Endothelial cell of umbilical vein (primary cell): ENCODE measurements at regions of chr7 and their contacts with region 1.

Region 1: DNA sequence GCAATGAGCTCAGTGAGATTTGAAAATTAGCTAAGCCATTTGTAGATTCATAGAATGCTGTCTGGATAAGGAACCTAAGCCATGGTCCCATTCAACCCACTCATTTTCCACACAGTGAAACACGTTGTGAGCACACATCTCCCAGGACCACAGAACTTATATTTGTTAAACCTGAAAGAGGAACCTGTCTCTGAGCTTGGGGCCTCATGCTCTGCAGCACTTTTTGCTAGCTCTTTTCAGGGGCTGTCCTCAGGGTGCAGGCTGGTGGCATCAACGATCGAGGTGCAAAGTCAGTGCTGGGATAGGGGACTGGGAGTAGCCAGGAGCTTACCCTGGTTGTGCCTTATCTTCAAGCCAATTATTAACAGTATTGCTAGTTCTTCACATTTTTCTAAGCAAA is 11.9 kb downstream of the HECW1 start:
- DNase-seq: no peak
- H3K4me3 ChIP-seq: no peak overlapping the region
- H3K27ac ChIP-seq: no peak overlapping the region
- H3K4me1 ChIP-seq: no peaks in the 10 kb centered on the region
- H3K27me3 ChIP-seq: peaks cover 0 to 6% of the 10 kb centered on the region in 2 experiments
- CTCF ChIP-seq: no peak
- POLR2A ChIP-seq: no peak

Region 2: DNA sequence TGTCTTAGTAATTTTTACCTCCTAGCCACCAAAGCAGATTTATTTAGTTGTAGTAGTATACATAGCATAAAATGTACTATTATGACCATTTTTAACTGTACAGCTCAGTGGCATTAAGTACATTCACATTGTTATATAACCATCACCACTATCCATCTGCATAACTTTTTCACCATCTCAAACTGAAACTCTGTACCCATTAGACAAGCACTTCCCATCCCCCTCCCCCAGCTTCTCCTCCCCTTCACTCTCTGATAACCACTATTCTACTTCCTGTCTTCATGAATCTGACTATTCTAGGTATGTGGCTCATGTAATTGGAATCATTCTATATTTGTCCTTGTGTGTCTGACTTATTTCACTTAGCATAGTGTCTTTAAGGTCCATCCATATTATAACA is 120.3 kb before region 1 on chr7:
- CTCF ChIA-PET with region 1: no interaction called
- POLR2A ChIA-PET with region 1: no interaction called
- dilution Hi-C with region 1: no loop called
- intact Hi-C with region 1: no loop called
- DNase-seq: no peak
- H3K4me3 ChIP-seq: no peak overlapping the region
- H3K27ac ChIP-seq: no peak overlapping the region
- H3K4me1 ChIP-seq: no peaks in the 10 kb centered on the region
- H3K27me3 ChIP-seq: peaks cover 1 to 5% of the 10 kb centered on the region in 2 experiments
- CTCF ChIP-seq: no peak
- POLR2A ChIP-seq: no peak

Region 3: GRCh38 chr7:43108255-43109011 is 16.0 kb before region 1 on chr7:
- CTCF ChIA-PET with region 1: interaction called, 15 read pairs
- POLR2A ChIA-PET with region 1: no interaction called
- dilution Hi-C with region 1: no loop called
- intact Hi-C with region 1: no loop called
- DNase-seq: peak; percentile 58
- H3K4me3 ChIP-seq: no peak overlapping the region
- H3K27ac ChIP-seq: no peak overlapping the region
- H3K4me1 ChIP-seq: no peaks in the 10 kb centered on the region
- H3K27me3 ChIP-seq: peaks cover 30 to 42% of the 10 kb centered on the region in 2 experiments
- CTCF ChIP-seq: peak; percentile 71 to 86
- POLR2A ChIP-seq: no peak